Tibial artery (tissue), 4 donors: ENCODE measurements at regions of chr3 and their contacts with region 1.

Region 1: DNA sequence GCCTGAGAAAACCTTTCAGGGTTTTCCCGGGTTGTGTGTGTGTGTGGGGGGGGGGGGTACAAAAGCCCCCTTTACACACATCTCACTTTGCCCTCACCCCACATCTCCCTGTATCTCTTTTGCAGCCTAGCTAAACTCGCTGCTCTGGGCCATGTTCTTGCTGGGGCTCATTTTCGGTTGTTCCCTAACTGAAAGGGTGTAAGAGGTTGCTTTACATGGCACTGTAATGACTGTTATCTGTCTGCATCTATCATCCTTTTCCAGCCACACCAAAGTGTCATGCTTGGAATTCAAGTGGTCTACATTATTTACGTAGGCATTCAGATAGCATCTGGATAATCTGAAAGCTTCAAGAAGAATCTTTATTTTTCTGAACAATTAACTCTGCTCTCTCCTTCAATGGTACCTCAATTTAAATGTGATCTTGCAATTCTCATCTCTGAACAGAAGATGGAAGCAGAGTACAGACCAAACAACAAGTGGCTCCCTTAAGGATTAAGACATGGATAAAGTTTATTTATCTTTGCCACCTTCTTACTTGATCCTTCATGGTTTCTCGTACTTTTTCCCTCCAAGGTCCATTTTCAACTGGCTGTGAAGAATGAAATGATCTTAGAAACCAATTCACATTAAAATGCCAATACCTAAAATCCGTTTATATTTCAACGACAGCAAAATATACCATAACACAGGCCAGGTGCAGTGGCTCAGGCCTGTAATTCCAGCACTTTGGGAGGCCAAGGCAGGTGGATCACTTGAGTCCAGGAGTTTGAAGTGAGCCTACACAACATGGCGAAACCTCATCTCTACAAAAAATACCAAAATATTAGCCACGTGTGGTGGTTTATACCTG is 34.9 kb downstream of the DCLK3 start:
- DNase-seq: no peak
- H3K4me3 ChIP-seq: no peak overlapping the region
- H3K27ac ChIP-seq: no peak overlapping the region
- H3K4me1 ChIP-seq: no peaks in the 10 kb centered on the region
- H3K27me3 ChIP-seq: peaks cover 0 to 3% of the 10 kb centered on the region in 2 donors
- CTCF ChIP-seq: peak; percentile 73 to 78

Region 2: DNA sequence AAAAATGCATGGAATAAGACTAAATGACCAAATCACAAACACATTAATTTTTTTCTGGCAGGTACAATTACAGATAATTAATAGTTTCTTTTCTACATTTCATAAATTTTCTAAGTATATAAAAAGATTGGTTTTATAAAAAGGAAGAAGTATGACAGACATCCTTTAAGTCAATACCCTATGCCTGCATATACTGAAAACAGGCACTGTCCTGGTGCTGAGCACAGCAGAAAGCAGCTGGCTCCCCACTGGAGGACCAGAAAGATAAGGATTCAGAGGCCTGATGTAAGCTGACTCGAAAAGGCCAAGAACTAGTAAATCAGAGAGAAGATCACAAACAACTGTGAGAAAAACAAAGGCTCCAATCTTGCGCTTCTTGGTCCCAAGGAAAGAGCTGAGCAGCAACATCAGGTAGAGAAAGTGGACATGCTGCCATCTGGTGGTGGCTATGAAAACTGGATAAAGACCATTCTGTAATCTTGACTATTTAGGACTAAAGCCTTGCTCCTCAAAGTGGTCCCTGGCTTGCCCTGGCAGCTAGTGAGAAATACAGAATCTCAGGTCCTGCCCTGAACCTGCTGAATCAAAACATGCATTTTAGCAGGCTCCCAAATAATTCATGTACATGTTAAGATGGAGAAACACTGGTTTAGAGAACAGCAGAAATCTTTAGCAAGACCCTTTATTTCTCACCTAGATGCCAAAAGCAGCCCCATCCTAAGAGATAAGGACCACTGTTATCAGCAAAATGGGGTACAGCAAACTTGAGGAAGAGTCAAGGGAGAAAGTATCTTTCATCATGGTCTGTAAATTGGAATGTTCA is 139.4 kb after region 1 on chr3:
- intact Hi-C with region 1: loop called (anchors 5 kb)
- DNase-seq: peak in 1 of 2 donors; percentile 55
- H3K4me3 ChIP-seq: no peak overlapping the region
- H3K27ac ChIP-seq: no peak overlapping the region
- H3K4me1 ChIP-seq: no peaks in the 10 kb centered on the region
- H3K27me3 ChIP-seq: no peaks in the 10 kb centered on the region
- CTCF ChIP-seq: peak; percentile 64 to 66

Region 3: GRCh38 chr3:36957862-36958686 is 228.6 kb after region 1 on chr3:
- intact Hi-C with region 1: loop called (anchors 5 kb)
- DNase-seq: no peak
- H3K4me3 ChIP-seq: no peak overlapping the region
- H3K27ac ChIP-seq: no peak overlapping the region
- H3K4me1 ChIP-seq: peaks cover 0 to 3% (median 0%) of the 10 kb centered on the region in 4 donors
- H3K27me3 ChIP-seq: no peaks in the 10 kb centered on the region
- CTCF ChIP-seq: no peak

Region 4: GRCh38 chr3:37024092-37024491 is 294.7 kb after region 1 on chr3:
- intact Hi-C with region 1: no loop called
- DNase-seq: no peak
- H3K4me3 ChIP-seq: no peak overlapping the region
- H3K27ac ChIP-seq: no peak overlapping the region
- H3K4me1 ChIP-seq: peaks cover 0 to 26% (median 5%) of the 10 kb centered on the region in 4 donors
- H3K27me3 ChIP-seq: no peaks in the 10 kb centered on the region
- CTCF ChIP-seq: peak; percentile 46 to 61